Esophagus squamous epithelium (tissue), 5 donors: ENCODE measurements at regions of chr3 and their contacts with region 1.

Region 1: DNA sequence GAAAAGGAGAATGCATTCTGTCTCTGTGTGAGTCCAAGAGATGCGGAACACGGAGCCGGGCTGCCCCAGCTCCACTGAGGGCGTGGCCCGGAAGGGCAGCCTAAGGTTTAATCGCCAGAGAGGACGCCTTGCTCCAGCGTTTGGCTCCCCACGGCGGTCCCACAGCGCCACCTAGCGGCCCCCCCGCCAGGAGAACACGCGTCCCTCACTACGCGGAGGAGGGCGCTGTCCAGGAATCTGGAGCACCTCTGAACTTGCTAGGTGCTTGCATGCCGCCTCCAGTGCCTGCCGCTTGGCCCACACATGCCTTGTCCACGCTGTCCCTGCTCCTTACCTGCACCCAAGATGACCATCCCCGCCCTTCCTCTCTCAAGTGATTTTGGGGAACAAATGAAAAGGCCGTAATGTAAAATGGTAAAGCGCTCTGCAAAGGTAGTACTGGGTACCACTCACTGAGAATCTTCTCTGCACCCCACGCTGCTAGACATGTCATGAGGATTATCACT is 14.4 kb upstream of the MRPS22 start:
- DNase-seq: no peak
- H3K4me3 ChIP-seq: peak overlapping the region in 2 of 4 donors; percentile 3 to 48
- H3K27ac ChIP-seq: no peak overlapping the region
- H3K4me1 ChIP-seq: peaks cover 0 to 9% (median 3%) of the 10 kb centered on the region in 3 donors
- H3K27me3 ChIP-seq: peaks cover 0 to 39% (median 0%) of the 10 kb centered on the region in 4 donors
- CTCF ChIP-seq: peak; percentile 89 to 99 (median 97)
- POLR2A ChIP-seq: no peak

Region 2: DNA sequence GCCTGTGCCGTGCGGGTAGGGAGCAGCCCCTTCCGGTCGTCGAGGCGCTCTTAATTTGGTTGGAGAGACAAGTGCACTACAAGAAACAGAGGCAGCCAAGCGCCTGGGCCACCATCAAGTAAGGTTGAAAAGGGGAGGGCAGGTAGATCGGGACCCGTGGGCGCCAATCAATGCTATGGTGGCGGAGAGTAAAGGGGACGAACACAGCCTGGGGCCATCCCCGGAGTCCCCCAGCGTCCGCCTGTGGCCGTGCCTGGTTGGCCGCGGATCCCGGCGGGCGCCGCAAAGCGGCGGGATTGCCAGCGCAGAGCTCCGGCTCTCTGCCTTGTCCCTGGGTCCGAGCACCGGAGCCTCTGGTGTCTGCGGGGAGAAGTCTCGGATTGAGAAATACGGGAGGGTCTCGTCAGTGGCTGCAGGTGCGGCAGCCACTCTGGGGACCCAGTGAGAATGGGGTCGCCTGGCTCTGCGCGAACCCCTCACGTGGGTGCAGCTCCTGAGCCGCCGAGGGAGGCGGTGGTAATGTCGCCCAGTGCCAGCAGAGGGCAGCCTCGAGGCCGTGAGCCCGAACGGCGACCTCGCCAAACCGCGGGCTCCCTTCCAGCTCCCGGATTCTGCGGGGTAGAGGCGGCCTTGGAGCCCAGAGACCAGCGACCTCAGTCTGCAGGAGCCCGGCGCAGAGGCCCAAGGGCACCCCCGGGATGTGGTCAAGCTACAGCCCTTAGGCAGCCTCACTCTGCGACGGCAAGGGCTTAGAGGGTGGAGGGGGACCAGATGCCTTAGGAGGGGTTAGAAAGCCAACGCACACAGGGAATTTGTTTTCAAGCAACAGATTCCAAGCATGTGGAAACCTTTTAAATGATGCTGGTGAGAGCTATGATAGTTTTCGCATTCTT is 393.3 kb before region 1 on chr3:
- intact Hi-C with region 1: loop called (anchors 5 kb)
- DNase-seq: no peak
- H3K4me3 ChIP-seq: peak overlapping the region; percentile 15 to 62 (median 34)
- H3K27ac ChIP-seq: no peak overlapping the region
- H3K4me1 ChIP-seq: peaks cover 34 to 46% (median 42%) of the 10 kb centered on the region in 3 donors
- H3K27me3 ChIP-seq: peaks cover 27 to 80% (median 51%) of the 10 kb centered on the region in 4 donors
- CTCF ChIP-seq: peak; percentile 82 to 90 (median 86)
- POLR2A ChIP-seq: no peak

Region 3: DNA sequence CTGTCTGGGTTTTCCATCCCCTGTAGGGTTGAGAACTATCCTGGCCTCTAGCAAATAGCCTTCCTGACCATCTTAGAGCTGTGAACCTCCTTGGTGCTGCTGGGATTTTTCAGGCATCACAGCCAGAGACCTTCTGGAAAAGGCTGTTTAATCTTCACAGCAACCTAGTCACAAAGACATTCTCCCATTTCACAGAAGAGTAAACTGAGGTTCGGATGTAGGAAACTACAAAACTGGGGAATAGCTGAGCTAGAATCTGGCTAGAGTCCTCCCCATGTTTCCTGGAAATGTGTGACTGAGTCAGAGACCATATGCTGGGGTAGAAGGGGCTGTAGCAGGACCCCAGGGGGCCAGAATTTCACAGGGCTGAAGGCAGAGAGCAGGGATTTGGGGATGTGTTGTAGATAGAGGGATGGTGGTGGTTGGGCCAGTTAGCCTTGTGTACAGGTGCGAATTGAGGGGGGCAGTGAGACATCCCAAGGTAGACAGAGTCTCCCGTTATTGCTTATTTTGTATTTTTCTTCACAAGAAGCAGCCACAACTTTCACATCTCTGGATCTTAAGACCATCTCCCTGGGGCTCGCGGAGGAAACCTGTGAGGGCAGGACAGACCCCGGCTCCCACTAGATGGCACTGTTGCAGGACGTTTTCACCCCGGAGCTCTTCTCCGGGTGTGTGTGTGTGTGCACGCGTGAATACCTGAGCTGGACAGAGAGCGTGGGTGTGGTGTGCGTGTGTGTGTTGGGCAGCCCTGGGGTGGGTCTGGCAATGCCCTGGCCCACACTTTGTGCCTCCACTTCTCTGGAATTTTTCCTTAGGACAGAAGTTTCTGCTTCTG is 217.8 kb before region 1 on chr3:
- intact Hi-C with region 1: loop called (anchors 5 kb)
- DNase-seq: no peak
- H3K4me3 ChIP-seq: no peak overlapping the region
- H3K27ac ChIP-seq: no peak overlapping the region
- H3K4me1 ChIP-seq: peaks cover 0 to 12% (median 0%) of the 10 kb centered on the region in 3 donors
- H3K27me3 ChIP-seq: no peaks in the 10 kb centered on the region
- CTCF ChIP-seq: peak in 5 of 6 experiments; percentile 53 to 70 (median 61)
- POLR2A ChIP-seq: no peak

Region 4: GRCh38 chr3:139448104-139448503 is 118.7 kb after region 1 on chr3:
- intact Hi-C with region 1: no loop called
- DNase-seq: no peak
- H3K4me3 ChIP-seq: no peak overlapping the region
- H3K27ac ChIP-seq: no peak overlapping the region
- H3K4me1 ChIP-seq: no peaks in the 10 kb centered on the region
- H3K27me3 ChIP-seq: no peaks in the 10 kb centered on the region
- CTCF ChIP-seq: no peak
- POLR2A ChIP-seq: no peak

Region 5: DNA sequence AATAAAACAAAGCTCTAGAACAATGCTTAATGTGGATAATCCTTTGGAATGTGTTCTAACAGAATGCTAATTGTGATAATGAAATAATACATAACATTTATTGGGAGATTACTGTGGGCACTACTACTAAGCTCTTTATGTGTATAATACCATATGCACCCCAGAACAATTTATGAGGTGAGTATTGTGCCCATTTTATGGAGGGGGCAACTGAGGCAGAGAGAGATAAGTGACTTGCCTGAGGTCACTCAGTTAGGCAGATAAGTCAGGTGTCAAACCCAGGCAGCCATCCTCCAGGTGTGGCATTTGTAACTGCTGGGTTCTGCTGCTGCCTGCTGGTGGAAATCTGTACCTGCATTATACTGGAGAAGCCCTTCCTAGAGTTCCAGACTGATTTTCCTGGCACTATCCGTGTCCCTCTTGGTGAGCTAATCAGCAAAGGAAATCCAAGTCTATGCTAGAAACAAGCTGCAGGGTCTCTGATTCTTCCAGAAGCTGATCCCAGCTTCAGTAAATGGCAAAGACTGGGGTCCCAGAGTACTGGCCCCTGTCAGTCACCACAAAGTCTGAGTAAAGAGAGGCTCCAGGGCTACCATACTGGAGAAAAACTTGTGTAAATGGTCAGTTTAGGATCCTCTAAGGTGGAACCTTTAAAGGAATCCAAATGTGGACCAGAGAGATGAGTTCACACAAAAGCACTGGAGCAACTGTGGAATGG is 232.7 kb after region 1 on chr3:
- intact Hi-C with region 1: no loop called
- DNase-seq: no peak
- H3K4me3 ChIP-seq: no peak overlapping the region
- H3K27ac ChIP-seq: no peak overlapping the region
- H3K4me1 ChIP-seq: peaks cover 3 to 28% (median 15%) of the 10 kb centered on the region in 3 donors
- H3K27me3 ChIP-seq: no peaks in the 10 kb centered on the region
- CTCF ChIP-seq: peak in 5 of 6 experiments; percentile 51 to 90 (median 72)
- POLR2A ChIP-seq: no peak

Region 6: GRCh38 chr3:140198242-140198641 is 868.8 kb after region 1 on chr3:
- intact Hi-C with region 1: no loop called
- DNase-seq: no peak
- H3K4me3 ChIP-seq: no peak overlapping the region
- H3K27ac ChIP-seq: no peak overlapping the region
- H3K4me1 ChIP-seq: no peaks in the 10 kb centered on the region
- H3K27me3 ChIP-seq: no peaks in the 10 kb centered on the region
- CTCF ChIP-seq: no peak
- POLR2A ChIP-seq: no peak